Vagina (tissue), 2 donors: ENCODE measurements at regions of chr11 and their contacts with region 1.

Region 1: GRCh38 chr11:69048718-69049489 is at the start of gene TPCN2:
- DNase-seq: peak in 1 of 2 donors; percentile 96
- H3K4me3 ChIP-seq: peak within 1 kb of the TSS; percentile 96 to 98
- H3K27ac ChIP-seq: peak within 1 kb of the TSS; percentile 97
- H3K4me1 ChIP-seq: peaks cover 70% of the 10 kb centered on the region
- H3K27me3 ChIP-seq: no peaks in the 10 kb centered on the region
- CTCF ChIP-seq: no peak
- POLR2A ChIP-seq: peak in 1 of 2 donors; percentile 79
- total RNA-seq, gene TPCN2: 21.1 TPM

Region 2: GRCh38 chr11:68839054-68839865 is 209.6 kb before region 1 on chr11:
- intact Hi-C with region 1: no loop called
- DNase-seq: peak in 1 of 2 donors; percentile 95
- H3K4me3 ChIP-seq: peak overlapping the region; percentile 69 to 98
- H3K27ac ChIP-seq: peak overlapping the region; percentile 97
- H3K4me1 ChIP-seq: peaks cover 60% of the 10 kb centered on the region
- H3K27me3 ChIP-seq: no peaks in the 10 kb centered on the region
- CTCF ChIP-seq: no peak
- POLR2A ChIP-seq: peak in 1 of 2 donors; percentile 12

Region 3: GRCh38 chr11:68989936-68990606 is 58.8 kb before region 1 on chr11:
- intact Hi-C with region 1: no loop called
- DNase-seq: peak in 1 of 2 donors; percentile 60
- H3K4me3 ChIP-seq: no peak overlapping the region
- H3K27ac ChIP-seq: no peak overlapping the region
- H3K4me1 ChIP-seq: no peaks in the 10 kb centered on the region
- H3K27me3 ChIP-seq: no peaks in the 10 kb centered on the region
- CTCF ChIP-seq: no peak
- POLR2A ChIP-seq: no peak

Region 4: DNA sequence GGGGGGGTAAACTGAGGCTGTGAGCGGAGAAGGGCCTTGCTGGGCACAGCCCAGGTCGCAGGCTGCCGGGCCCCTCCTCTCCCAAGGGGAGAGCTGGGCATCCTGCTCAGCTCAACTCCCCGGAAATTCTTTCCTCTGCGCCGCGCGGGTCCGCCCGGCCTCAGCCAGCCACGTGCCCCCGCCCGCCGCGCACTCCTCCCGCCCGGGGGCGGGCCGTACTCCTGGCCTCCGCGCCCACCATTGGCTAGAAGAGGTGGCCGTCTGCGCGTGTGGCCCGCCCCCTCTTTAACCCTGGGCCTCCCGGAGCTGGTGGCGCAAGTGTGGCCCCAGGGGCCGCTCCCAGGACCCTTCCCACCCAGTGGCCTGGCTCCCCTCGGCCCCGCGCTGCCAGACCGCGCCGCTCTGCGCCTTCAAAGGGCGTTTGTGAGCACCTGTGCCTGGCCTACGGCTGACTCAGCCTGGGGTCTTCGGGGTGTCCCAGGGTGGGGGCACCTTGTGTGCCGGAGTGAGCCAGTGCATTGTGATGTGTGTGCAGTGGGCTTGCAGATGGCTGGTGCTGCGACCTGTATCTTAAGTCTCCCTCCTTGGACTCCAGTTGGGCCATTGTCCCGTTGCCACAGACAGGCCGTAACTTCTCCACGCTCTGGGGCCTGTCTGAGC is 37.8 kb before region 1 on chr11:
- intact Hi-C with region 1: loop called (anchors 5 kb)
- DNase-seq: no peak
- H3K4me3 ChIP-seq: peak overlapping the region; percentile 62 to 63
- H3K27ac ChIP-seq: peak overlapping the region; percentile 95
- H3K4me1 ChIP-seq: peaks cover 53% of the 10 kb centered on the region
- H3K27me3 ChIP-seq: no peaks in the 10 kb centered on the region
- CTCF ChIP-seq: no peak
- POLR2A ChIP-seq: peak in 1 of 2 donors; percentile 81

Region 5: GRCh38 chr11:69088676-69089146 is 39.8 kb after region 1 on chr11:
- intact Hi-C with region 1: no loop called
- DNase-seq: no peak
- H3K4me3 ChIP-seq: no peak overlapping the region
- H3K27ac ChIP-seq: no peak overlapping the region
- H3K4me1 ChIP-seq: peaks cover 6% of the 10 kb centered on the region
- H3K27me3 ChIP-seq: no peaks in the 10 kb centered on the region
- CTCF ChIP-seq: peak; percentile 37 to 86 (median 73)
- POLR2A ChIP-seq: no peak